Right ventricle myocardium inferior (tissue), 1 donor: ENCODE measurements at regions of chr13 and their contacts with region 1.

Region 1: DNA sequence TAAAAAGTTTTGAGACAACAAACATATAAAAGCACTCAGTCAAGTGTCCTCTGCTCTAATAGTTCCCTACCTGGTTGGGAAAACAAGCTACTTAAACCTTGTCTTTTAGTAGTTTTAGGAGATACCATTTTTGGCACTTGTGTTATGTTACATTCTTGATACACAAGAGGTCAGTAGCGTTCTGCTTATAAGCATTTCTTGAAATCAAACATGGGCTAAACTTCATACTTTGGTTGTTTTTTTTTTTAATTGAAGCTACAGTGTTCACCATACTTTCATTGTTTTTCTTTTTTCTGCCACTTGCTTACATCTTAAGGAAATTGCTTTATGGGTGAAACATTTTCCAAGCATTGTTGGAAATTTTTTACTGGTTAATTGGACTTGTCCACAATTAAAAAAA is 12.9 kb downstream of the NHLRC3 start:
- DNase-seq: no peak
- ATAC-seq: no peak

Region 2: GRCh38 chr13:38990693-38991092 is 60.5 kb before region 1 on chr13 and contains the start of gene STOML3:
- intact Hi-C with region 1: no loop called
- DNase-seq: no peak
- ATAC-seq: no peak
- total RNA-seq, gene STOML3: not detected

Region 3: GRCh38 chr13:39616087-39616694 is 565.0 kb after region 1 on chr13:
- intact Hi-C with region 1: loop called (anchors 5 kb)
- DNase-seq: no peak
- ATAC-seq: peak; percentile 84

Region 4: GRCh38 chr13:39676315-39676876 is 625.2 kb after region 1 on chr13:
- intact Hi-C with region 1: loop called (anchors 5 kb)
- DNase-seq: no peak
- ATAC-seq: no peak